Calu3 (cell line): ENCODE measurements at regions of chr10 and their contacts with region 1.

Region 1: GRCh38 chr10:44932517-44933450 is 21.6 kb downstream of the TMEM72 start:
- DNase-seq: peak; percentile 94
- H3K4me3 Mint-ChIP-seq: no peak overlapping the region
- H3K27ac Mint-ChIP-seq: no peak overlapping the region
- H3K4me1 Mint-ChIP-seq: peaks cover 17% of the 10 kb centered on the region
- H3K27me3 Mint-ChIP-seq: no peaks in the 10 kb centered on the region
- CTCF ChIP-seq: peak; percentile 93

Region 2: GRCh38 chr10:44974628-44975431 is 42.0 kb after region 1 on chr10:
- CTCF ChIA-PET with region 1: interaction called, 30 read pairs
- intact Hi-C with region 1: loop called (anchors 1 kb)
- DNase-seq: peak; percentile 80
- H3K4me3 Mint-ChIP-seq: peak overlapping the region; percentile 52
- H3K27ac Mint-ChIP-seq: no peak overlapping the region
- H3K4me1 Mint-ChIP-seq: peaks cover 28% of the 10 kb centered on the region
- H3K27me3 Mint-ChIP-seq: no peaks in the 10 kb centered on the region
- CTCF ChIP-seq: peak; percentile 94

Region 3: DNA sequence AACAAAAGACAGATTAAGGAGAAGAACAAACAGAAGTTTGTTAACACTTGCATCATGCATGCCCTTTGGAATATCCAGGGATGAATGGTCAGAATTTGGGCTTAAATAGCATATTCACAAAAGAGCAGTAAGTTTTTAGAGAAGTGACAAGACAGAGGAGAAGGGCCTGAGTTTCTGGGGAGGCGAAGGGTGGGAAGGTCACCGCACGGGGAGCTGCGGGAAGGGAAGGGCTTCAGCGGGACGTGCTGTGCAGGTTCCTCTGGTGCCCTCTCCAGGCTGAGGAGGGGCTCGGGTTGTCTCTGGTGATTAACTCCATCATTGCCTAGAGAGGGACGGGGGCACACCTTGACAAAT is 57.5 kb after region 1 on chr10:
- CTCF ChIA-PET with region 1: interaction called, 11 read pairs
- intact Hi-C with region 1: loop called (anchors 5 kb)
- DNase-seq: peak; percentile 40
- H3K4me3 Mint-ChIP-seq: no peak overlapping the region
- H3K27ac Mint-ChIP-seq: peak overlapping the region; percentile 34
- H3K4me1 Mint-ChIP-seq: peaks cover 10% of the 10 kb centered on the region
- H3K27me3 Mint-ChIP-seq: no peaks in the 10 kb centered on the region
- CTCF ChIP-seq: peak; percentile 30

Region 4: DNA sequence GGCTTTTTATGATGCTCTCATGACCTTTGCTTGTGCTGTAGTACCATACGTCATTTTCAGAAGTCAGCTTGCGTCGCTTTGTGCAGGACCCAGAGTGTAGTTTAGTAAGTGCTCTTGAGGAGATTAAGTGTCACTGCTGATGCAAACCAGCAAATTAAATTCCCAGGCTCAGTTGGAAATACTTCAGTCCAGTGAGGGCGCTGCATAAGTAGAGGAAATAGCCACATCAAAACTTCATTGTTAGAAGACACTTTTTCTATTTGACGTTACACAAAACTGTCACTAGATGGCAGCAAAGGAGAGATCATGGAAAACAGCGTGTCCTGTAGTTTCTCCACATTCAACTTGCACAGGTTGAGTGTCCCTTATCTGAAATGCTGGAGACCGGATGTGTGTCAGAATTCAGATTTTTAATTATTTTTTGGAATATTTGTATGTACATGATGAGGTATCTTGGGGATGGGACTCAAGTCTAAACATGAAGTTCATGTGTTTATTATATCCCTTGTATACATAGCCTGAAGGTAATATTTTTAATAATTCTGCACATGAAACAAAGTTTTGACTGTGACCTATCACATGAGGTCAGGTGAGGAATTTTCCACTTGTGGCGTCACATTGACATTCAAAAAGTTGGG is 75.9 kb after region 1 on chr10:
- CTCF ChIA-PET with region 1: no interaction called
- intact Hi-C with region 1: loop called (anchors 2 kb)
- DNase-seq: peak; percentile 53
- H3K4me3 Mint-ChIP-seq: no peak overlapping the region
- H3K27ac Mint-ChIP-seq: no peak overlapping the region
- H3K4me1 Mint-ChIP-seq: no peaks in the 10 kb centered on the region
- H3K27me3 Mint-ChIP-seq: peaks cover 12% of the 10 kb centered on the region
- CTCF ChIP-seq: peak; percentile 70

Region 5: DNA sequence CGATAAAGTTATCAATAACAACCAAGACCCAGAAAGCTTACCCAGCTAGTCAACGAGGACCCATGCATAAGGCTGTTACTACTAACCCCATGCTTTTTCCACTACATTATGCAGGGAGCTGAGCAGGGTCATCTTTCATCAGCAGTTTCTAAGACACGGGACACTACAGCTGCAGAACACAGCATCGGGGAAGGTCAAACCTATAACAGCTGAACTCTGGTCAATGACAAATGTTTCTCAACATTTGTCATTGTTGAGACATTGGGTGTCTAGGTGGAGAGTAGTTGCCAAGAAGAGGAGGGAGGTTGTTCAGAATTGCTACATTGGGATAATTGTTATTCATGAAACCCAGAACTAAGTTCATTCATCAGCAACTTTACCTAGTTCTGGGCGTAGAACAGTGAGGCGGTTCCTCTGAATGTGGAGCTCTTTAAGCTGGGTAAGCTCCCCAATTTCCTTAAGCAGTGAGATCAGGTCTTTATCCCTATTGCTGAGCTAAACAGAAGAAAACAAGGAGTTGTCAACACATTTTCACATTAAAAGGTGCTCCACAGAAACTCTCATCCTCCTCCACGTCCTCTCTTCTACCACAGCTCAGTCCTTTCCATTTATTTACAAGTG is 173.6 kb after region 1 on chr10:
- CTCF ChIA-PET with region 1: no interaction called
- intact Hi-C with region 1: no loop called
- DNase-seq: no peak
- H3K4me3 Mint-ChIP-seq: no peak overlapping the region
- H3K27ac Mint-ChIP-seq: no peak overlapping the region
- H3K4me1 Mint-ChIP-seq: no peaks in the 10 kb centered on the region
- H3K27me3 Mint-ChIP-seq: peaks cover 42% of the 10 kb centered on the region
- CTCF ChIP-seq: no peak

Region 6: DNA sequence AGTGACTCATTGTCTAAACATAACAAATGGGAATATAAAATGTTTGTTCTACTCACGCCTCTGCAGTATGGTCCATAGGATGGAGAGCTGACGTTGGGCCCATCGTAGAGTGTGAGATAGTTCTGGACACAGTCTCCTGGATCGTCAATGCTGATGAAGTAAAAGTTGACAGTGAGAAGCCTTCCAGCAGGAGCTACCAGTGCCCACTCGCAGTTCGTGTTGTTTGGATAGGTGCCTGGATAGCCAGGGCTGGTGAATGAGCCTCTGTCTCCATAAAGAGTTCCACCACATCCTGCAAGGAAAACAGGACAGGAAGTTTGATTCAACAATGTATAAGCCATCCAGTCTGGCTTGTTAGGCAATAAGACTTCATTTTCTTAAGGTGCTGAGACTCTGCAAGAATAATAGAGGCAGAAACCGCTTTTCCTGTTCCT is 303.0 kb after region 1 on chr10:
- CTCF ChIA-PET with region 1: no interaction called
- intact Hi-C with region 1: loop called (anchors 10 kb)
- DNase-seq: peak; percentile 5
- H3K4me3 Mint-ChIP-seq: no peak overlapping the region
- H3K27ac Mint-ChIP-seq: no peak overlapping the region
- H3K4me1 Mint-ChIP-seq: peaks cover 10% of the 10 kb centered on the region
- H3K27me3 Mint-ChIP-seq: peaks cover 24% of the 10 kb centered on the region
- CTCF ChIP-seq: no peak